Activated T-helper 1 cell treated with anti-CD3 and anti-CD28 coated beads, Interleukin-12 subunit alpha, Interleukin-12 subunit beta, Interleukin-2, Interleukin-4 antibody, amounts not matched to agents 30 ng/mL and 10 ng/mL and 1 ng/mL, durations not matched to agents 14 hours and 24 hours and 36 hours (primary cell): ENCODE measurements at regions of chr18 and their contacts with region 1.

Region 1: GRCh38 chr18:62721839-62722795 is 6.8 kb downstream of the PHLPP1 start:
- DNase-seq: no peak
- H3K4me3 Mint-ChIP-seq: no peak overlapping the region
- H3K27ac Mint-ChIP-seq: no peak overlapping the region
- H3K4me1 Mint-ChIP-seq: peaks cover 44% of the 10 kb centered on the region
- H3K27me3 Mint-ChIP-seq: peaks cover 24% of the 10 kb centered on the region

Region 2: DNA sequence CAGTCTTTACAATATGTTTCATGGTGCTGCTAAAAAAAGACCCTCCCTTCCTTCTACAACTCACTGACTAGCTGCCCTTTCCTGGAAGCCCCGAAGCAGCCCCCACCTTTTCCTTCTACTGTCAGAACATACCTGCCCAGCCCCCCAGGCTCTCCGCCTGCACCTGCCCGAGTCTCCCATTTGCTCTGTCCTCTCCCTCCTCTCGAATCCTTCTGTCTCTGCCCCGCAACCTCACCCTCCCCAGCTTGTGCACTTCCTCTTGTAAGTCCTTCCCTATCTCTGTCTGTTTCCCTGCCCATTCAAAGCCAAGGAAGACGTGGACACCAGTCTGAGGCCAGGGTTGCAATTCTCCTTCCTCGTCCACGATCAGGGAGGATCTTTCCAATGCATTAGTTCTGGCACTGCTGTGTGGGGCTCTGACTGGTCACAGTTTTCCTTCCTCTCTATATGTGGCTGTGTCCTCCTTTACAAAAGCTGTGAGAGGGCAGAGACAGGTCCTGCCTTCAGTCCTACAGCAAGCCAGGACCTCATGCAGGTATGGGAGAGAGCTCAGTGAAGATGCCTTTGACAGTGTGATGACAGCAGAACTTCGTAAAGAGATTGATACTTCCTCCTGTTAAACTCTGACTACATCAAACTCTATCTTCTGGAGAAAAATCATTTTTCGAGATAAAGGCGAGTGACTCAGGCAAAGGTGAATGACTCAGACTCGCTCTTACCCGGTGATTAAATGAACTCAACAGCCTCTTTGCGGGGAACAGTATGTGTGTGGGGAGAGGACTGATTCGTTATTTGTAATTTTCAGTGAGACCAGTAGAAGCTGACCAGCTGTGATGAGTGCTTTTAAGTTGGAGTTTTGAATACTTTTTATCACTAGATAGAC is 382.8 kb before region 1 on chr18:
- intact Hi-C with region 1: loop called (anchors 5 kb)
- DNase-seq: no peak
- H3K4me3 Mint-ChIP-seq: peak overlapping the region; percentile 69
- H3K27ac Mint-ChIP-seq: peak overlapping the region; percentile 89
- H3K4me1 Mint-ChIP-seq: peaks cover 43% of the 10 kb centered on the region
- H3K27me3 Mint-ChIP-seq: no peaks in the 10 kb centered on the region